ENCODE measurements at regions of chr20 and their contacts with region 1.

Region 1: GRCh38 chr20:20083807-20084206 is 31.5 kb downstream of the CFAP61 start:
- DNase-seq: peak in 1 of 42 donors; percentile 6

Region 2: GRCh38 chr20:20237093-20237959 is 153.5 kb after region 1 on chr20:
- intact Hi-C with region 1: loop called (anchors 10 kb)
- DNase-seq: peak in 33 of 42 donors; percentile 8 to 78 (median 46)

Region 3: DNA sequence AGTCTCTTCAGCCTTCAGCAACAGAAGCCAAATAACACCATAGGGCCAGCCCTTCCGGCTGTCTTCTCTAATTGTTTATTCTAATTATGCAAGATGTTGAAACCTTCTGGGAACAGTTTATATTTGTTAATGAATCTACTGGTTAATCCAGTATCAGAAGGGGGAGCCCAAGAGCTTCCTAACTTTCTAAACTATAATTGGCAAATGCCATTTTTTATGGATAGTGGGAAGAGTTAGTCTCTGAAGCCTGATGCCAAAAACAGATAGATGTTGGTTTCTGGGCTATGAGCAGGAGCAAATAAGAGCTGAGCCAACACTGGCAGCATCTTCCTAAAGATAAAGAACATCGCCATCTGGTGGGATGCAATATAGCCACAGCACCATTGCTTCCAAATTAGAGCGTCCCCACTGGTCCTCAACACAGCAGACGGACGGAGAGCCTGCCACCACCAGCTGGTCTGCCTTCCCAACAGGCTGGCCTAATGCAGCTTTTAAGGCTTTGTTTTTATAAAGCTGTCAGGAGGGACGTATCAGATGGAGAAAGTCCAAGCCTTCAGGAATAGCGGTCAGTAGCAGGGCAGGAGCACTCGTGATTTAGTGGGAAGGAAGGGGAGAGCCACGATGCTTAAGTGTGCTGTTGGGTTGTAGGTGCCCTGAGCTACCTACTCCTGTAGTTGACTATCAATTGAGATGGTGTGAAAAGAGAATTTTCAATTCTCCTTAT is 509.8 kb after region 1 on chr20:
- intact Hi-C with region 1: loop called (anchors 10 kb)
- DNase-seq: peak in 30 of 42 donors; percentile 6 to 71 (median 38)